Activated CD4-positive, alpha-beta T cell treated with anti-CD3 and anti-CD28 coated beads for 36 hours (primary cell): ENCODE measurements at regions of chr2 and their contacts with region 1.

Region 1: GRCh38 chr2:103161456-103162289 is 399.8 kb downstream of the TMEM182 start:
- DNase-seq: peak; percentile 6
- ATAC-seq: no peak
- H3K4me3 Mint-ChIP-seq: no peak overlapping the region
- H3K27ac Mint-ChIP-seq: no peak overlapping the region
- H3K4me1 Mint-ChIP-seq: no peaks in the 10 kb centered on the region
- H3K27me3 Mint-ChIP-seq: no peaks in the 10 kb centered on the region

Region 2: GRCh38 chr2:102690012-102690411 is 471.7 kb before region 1 on chr2:
- CTCF ChIA-PET with region 1: no interaction called
- POLR2A ChIA-PET with region 1: no interaction called
- intact Hi-C with region 1: no loop called
- DNase-seq: no peak
- ATAC-seq: peak; percentile 43
- H3K4me3 Mint-ChIP-seq: no peak overlapping the region
- H3K27ac Mint-ChIP-seq: no peak overlapping the region
- H3K4me1 Mint-ChIP-seq: peaks cover 8% of the 10 kb centered on the region
- H3K27me3 Mint-ChIP-seq: no peaks in the 10 kb centered on the region

Region 3: DNA sequence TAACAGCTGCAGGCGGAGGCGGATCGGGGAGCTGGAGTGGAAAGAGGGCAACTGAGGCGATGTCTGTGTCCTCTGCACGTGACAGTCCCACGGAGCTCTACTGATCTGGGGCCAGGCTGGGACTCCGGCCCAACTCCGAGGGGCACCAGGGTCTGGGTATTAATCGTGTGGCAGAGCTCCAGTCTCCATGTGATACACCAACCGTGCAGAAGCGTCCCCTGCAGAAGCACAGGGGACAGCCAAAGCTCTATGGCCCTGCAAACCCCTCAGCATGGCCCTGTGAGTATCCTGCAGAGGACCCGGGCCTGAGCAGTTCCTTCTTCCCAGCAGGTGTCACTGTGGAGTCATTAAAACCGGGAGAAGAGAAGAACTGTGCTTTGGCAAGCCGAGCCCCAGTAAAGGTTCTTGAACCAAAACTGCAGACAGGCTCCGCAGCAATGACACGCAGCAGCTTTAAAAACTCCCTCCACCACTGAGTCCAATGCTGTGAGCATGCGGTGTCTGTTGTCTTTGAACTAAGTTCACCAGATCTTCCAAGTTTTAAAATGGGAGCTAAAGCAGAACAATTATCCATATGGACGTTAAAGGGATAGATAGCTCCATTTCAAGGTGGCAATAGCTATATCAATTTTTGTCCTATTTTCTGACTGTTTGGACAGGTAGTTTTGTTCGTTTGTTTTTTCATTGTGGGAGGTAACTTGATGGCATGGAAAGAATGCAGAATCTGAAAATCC is 320.4 kb before region 1 on chr2:
- CTCF ChIA-PET with region 1: no interaction called
- POLR2A ChIA-PET with region 1: no interaction called
- intact Hi-C with region 1: loop called in 1 of 2 experiments (anchors 10 kb)
- DNase-seq: peak; percentile 56
- ATAC-seq: peak; percentile 71
- H3K4me3 Mint-ChIP-seq: no peak overlapping the region
- H3K27ac Mint-ChIP-seq: no peak overlapping the region
- H3K4me1 Mint-ChIP-seq: no peaks in the 10 kb centered on the region
- H3K27me3 Mint-ChIP-seq: peaks cover 3% of the 10 kb centered on the region

Region 4: DNA sequence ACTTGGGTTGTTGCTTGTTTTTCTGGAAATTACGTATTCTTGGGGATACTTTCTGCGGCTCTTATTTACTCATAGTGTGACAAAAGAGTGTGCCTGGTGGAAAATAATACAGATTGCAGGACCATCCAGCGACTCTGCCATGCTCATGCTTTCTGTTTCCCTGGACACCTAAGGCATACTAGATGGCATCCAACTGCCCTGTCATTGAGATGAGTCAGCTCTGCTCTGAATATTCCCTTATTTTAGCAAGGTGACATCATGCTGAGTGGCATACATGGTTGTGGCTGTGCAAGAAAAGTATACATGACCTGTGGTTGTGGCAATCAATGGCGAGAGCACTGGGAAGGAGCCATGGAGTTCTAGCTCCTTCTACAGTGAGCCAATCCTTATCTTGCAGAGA is 71.2 kb after region 1 on chr2:
- CTCF ChIA-PET with region 1: no interaction called
- POLR2A ChIA-PET with region 1: no interaction called
- intact Hi-C with region 1: no loop called
- DNase-seq: no peak
- ATAC-seq: no peak
- H3K4me3 Mint-ChIP-seq: no peak overlapping the region
- H3K27ac Mint-ChIP-seq: no peak overlapping the region
- H3K4me1 Mint-ChIP-seq: no peaks in the 10 kb centered on the region
- H3K27me3 Mint-ChIP-seq: no peaks in the 10 kb centered on the region

Region 5: GRCh38 chr2:103335403-103335802 is 173.7 kb after region 1 on chr2:
- CTCF ChIA-PET with region 1: no interaction called
- POLR2A ChIA-PET with region 1: no interaction called
- intact Hi-C with region 1: no loop called
- DNase-seq: no peak
- ATAC-seq: no peak
- H3K4me3 Mint-ChIP-seq: no peak overlapping the region
- H3K27ac Mint-ChIP-seq: no peak overlapping the region
- H3K4me1 Mint-ChIP-seq: no peaks in the 10 kb centered on the region
- H3K27me3 Mint-ChIP-seq: no peaks in the 10 kb centered on the region

Region 6: DNA sequence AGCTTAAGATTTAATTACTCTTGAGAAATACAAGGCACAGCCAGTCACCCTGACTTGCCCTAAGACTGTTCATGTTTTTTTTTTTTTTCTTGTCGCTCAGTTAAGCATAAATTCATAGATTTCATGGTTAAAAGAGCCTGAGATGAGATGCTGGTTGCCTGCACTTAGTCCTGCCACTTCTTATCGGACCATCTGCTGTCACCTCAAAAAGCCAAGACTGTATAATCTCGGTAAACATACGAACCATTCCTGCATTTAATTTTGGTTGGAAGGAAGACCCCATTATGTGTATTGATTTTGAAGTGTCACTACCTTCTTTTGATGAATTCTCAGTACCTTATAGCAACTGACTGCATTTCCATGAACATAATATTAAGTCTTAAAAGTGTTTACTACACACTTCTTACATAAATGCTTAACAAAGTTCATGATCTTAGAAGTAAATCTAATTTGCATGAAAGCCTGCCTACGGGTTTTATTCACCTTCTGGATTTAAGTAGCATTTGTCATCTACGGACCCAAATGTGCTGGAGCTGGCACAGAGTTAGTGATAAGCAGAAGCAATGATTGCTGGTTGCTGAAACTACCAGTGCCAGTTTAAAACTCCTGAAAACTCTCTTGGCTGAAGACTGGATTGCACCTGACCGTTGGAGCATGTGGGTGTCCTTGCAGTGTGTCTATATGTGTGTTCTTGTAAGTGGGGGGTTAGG is 443.6 kb after region 1 on chr2:
- CTCF ChIA-PET with region 1: no interaction called
- POLR2A ChIA-PET with region 1: no interaction called
- intact Hi-C with region 1: no loop called
- DNase-seq: no peak
- ATAC-seq: no peak
- H3K4me3 Mint-ChIP-seq: no peak overlapping the region
- H3K27ac Mint-ChIP-seq: no peak overlapping the region
- H3K4me1 Mint-ChIP-seq: no peaks in the 10 kb centered on the region
- H3K27me3 Mint-ChIP-seq: no peaks in the 10 kb centered on the region

Region 7: GRCh38 chr2:104412384-104412783 is 1250.7 kb after region 1 on chr2:
- CTCF ChIA-PET with region 1: no interaction called
- POLR2A ChIA-PET with region 1: no interaction called
- intact Hi-C with region 1: loop called in 1 of 2 experiments (anchors 2 kb)
- DNase-seq: peak; percentile 58
- ATAC-seq: no peak
- H3K4me3 Mint-ChIP-seq: no peak overlapping the region
- H3K27ac Mint-ChIP-seq: no peak overlapping the region
- H3K4me1 Mint-ChIP-seq: no peaks in the 10 kb centered on the region
- H3K27me3 Mint-ChIP-seq: peaks cover 15% of the 10 kb centered on the region

Region 8: GRCh38 chr2:104872866-104873688 is 1711.4 kb after region 1 on chr2:
- CTCF ChIA-PET with region 1: interaction called, 3 read pairs
- POLR2A ChIA-PET with region 1: no interaction called
- intact Hi-C with region 1: loop called in 1 of 2 experiments (anchors 5 kb)
- DNase-seq: peak; percentile 79
- ATAC-seq: peak; percentile 88
- H3K4me3 Mint-ChIP-seq: peak overlapping the region; percentile 51
- H3K27ac Mint-ChIP-seq: no peak overlapping the region
- H3K4me1 Mint-ChIP-seq: peaks cover 12% of the 10 kb centered on the region
- H3K27me3 Mint-ChIP-seq: peaks cover 56% of the 10 kb centered on the region